CD4-positive, alpha-beta T cell (primary cell): ENCODE measurements at regions of chr2 and their contacts with region 1.

Region 1: DNA sequence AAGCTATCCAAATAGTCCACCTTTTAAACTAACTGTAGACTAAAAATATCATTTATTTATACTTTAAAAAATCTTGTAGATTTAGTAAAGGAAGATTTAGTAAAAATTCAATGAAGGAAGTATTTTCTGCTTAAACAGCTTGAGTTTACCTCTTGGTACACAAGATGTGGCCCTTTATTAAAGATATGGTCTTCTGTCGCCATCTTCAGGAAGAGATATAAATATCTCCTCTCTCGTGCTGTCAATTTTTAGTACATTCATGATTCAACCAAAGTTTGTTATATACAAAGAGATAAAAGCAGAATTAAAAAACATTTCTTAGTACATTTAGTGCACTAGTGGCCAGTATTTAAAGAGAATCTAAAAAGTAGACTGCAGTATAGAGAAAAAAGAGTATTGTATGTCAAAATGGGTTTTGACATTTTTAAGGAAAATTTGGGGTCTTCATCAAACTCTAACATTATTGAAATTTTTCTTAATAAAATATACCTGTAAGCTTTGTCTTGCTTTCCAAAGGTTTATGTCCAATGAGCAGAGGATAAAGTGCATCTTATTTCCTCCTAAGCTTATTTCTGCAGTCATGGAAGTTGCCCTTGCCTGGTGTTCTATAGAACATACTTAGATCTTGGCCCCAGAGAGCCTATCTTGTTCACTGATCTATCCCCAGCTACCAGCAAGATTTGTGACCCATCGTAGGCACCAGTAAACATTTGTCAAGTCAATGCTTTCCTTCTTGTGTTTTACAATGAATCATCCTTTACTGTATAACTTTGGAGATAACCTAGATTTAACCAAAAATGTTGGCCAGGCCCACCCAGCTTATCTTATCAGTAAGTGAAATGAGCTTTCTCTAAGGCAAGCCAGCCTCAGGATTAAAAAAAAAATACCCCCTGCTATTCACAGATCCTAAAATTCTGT is 18.5 kb upstream of the EML6 start:
- DNase-seq: peak in 3 of 14 experiments; percentile 73 to 78 (median 78)
- ATAC-seq: peak; percentile 72
- H3K4me3 ChIP-seq: no peak overlapping the region
- H3K4me3 Mint-ChIP-seq: no peak overlapping the region
- H3K27ac ChIP-seq: no peak overlapping the region
- H3K27ac Mint-ChIP-seq: no peak overlapping the region
- H3K4me1 ChIP-seq: peaks cover 12% of the 10 kb centered on the region
- H3K4me1 Mint-ChIP-seq: no peaks in the 10 kb centered on the region
- H3K27me3 ChIP-seq: peaks cover 17 to 23% of the 10 kb centered on the region in 2 experiments
- H3K27me3 Mint-ChIP-seq: peaks cover 16% of the 10 kb centered on the region
- CTCF ChIP-seq: peak; percentile 77

Region 2: DNA sequence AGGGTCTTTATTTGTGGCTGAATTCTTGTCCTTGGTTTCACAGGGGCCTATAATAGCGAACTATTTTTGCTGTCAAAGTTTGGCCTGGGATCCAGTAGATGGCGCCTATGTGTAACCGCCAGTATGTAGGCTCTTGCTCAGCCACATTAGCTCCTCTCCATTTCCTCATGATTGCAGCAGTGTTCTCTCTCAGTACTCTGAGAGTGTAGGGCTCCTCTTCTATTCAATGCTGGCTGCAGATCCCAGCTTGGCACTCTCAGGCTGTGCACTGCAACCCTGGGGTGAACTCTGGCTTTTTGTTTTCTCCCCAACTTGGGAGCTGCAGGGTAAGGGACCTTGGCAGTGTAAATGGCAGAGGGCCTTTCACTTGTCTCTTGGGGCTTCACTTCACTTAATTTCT is 1282.0 kb before region 1 on chr2:
- CTCF ChIA-PET with region 1: no interaction called
- POLR2A ChIA-PET with region 1: no interaction called
- intact Hi-C with region 1: loop called in 1 of 2 experiments (anchors 5 kb)
- DNase-seq: no peak
- ATAC-seq: no peak
- H3K4me3 ChIP-seq: no peak overlapping the region
- H3K4me3 Mint-ChIP-seq: no peak overlapping the region
- H3K27ac ChIP-seq: no peak overlapping the region
- H3K27ac Mint-ChIP-seq: no peak overlapping the region
- H3K4me1 ChIP-seq: no peaks in the 10 kb centered on the region
- H3K4me1 Mint-ChIP-seq: no peaks in the 10 kb centered on the region
- H3K27me3 ChIP-seq: no peaks in the 10 kb centered on the region
- H3K27me3 Mint-ChIP-seq: peaks cover 5% of the 10 kb centered on the region
- CTCF ChIP-seq: no peak

Region 3: DNA sequence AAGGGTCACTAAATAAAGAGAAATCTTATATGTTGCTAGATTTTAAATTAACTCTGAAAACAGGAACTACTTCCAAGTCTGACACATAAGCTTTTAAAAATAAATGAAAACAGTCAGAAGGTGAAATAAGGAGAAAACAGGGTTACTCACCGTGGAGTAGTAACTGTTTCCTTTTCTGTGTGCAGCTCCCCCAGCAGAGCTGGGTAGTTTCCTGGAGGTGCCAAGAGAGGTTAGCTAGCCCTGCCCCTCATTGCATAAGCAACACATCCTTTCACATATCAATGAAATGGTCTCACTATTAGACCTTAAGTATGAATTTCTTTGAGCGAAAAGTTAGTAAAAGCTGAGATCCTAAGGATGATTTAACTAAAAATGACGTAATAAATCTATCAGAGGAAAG is 791.2 kb before region 1 on chr2:
- CTCF ChIA-PET with region 1: no interaction called
- POLR2A ChIA-PET with region 1: no interaction called
- intact Hi-C with region 1: loop called (anchors 10 kb)
- DNase-seq: peak in 5 of 14 experiments; percentile 11 to 42 (median 13)
- ATAC-seq: peak; percentile 76
- H3K4me3 ChIP-seq: no peak overlapping the region
- H3K4me3 Mint-ChIP-seq: no peak overlapping the region
- H3K27ac ChIP-seq: no peak overlapping the region
- H3K27ac Mint-ChIP-seq: peak overlapping the region; percentile 43
- H3K4me1 ChIP-seq: no peaks in the 10 kb centered on the region
- H3K4me1 Mint-ChIP-seq: peaks cover 9% of the 10 kb centered on the region
- H3K27me3 ChIP-seq: no peaks in the 10 kb centered on the region
- H3K27me3 Mint-ChIP-seq: no peaks in the 10 kb centered on the region
- CTCF ChIP-seq: no peak

Region 4: GRCh38 chr2:54106631-54107454 is 598.1 kb before region 1 on chr2:
- CTCF ChIA-PET with region 1: no interaction called
- POLR2A ChIA-PET with region 1: interaction called, 3 read pairs
- intact Hi-C with region 1: loop called (anchors 2 kb)
- DNase-seq: peak in 12 of 14 experiments; percentile 11 to 77 (median 30)
- ATAC-seq: peak; percentile 78
- H3K4me3 ChIP-seq: no peak overlapping the region
- H3K4me3 Mint-ChIP-seq: no peak overlapping the region
- H3K27ac ChIP-seq: no peak overlapping the region
- H3K27ac Mint-ChIP-seq: no peak overlapping the region
- H3K4me1 ChIP-seq: peaks cover 8% of the 10 kb centered on the region
- H3K4me1 Mint-ChIP-seq: peaks cover 11% of the 10 kb centered on the region
- H3K27me3 ChIP-seq: no peaks in the 10 kb centered on the region
- H3K27me3 Mint-ChIP-seq: no peaks in the 10 kb centered on the region
- CTCF ChIP-seq: peak; percentile 66

Region 5: DNA sequence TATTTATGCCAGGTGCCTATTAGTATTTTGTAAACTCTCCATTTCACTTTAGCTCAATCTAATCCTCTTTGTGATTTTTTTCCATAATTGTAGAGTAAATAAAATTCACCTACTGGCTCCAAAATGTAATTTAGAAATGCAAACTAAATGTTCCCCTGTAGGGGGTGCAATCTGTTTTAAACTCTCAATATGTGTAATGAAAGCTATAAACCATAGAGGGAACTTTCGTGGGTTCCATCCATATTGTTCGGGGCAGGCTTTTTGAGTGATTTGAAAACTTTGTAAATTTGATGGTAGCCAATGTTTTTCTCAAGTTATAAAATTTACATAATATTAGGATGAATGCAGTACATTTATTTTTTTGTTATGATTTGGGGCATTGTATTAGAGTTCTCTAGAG is 498.4 kb before region 1 on chr2:
- CTCF ChIA-PET with region 1: interaction called, 3 read pairs
- POLR2A ChIA-PET with region 1: no interaction called
- intact Hi-C with region 1: loop called in 1 of 2 experiments (anchors 10 kb)
- DNase-seq: peak in 2 of 14 experiments; percentile 5 to 6
- ATAC-seq: no peak
- H3K4me3 ChIP-seq: no peak overlapping the region
- H3K4me3 Mint-ChIP-seq: no peak overlapping the region
- H3K27ac ChIP-seq: no peak overlapping the region
- H3K27ac Mint-ChIP-seq: no peak overlapping the region
- H3K4me1 ChIP-seq: no peaks in the 10 kb centered on the region
- H3K4me1 Mint-ChIP-seq: peaks cover 5% of the 10 kb centered on the region
- H3K27me3 ChIP-seq: no peaks in the 10 kb centered on the region
- H3K27me3 Mint-ChIP-seq: no peaks in the 10 kb centered on the region
- CTCF ChIP-seq: peak; percentile 43

Region 6: GRCh38 chr2:54665436-54665856 is 39.5 kb before region 1 on chr2:
- CTCF ChIA-PET with region 1: interaction called, 10 read pairs
- POLR2A ChIA-PET with region 1: no interaction called
- intact Hi-C with region 1: no loop called
- DNase-seq: peak in 9 of 14 experiments; percentile 10 to 71 (median 32)
- ATAC-seq: peak; percentile 77
- H3K4me3 ChIP-seq: no peak overlapping the region
- H3K4me3 Mint-ChIP-seq: no peak overlapping the region
- H3K27ac ChIP-seq: no peak overlapping the region
- H3K27ac Mint-ChIP-seq: peak overlapping the region; percentile 18
- H3K4me1 ChIP-seq: no peaks in the 10 kb centered on the region
- H3K4me1 Mint-ChIP-seq: peaks cover 5% of the 10 kb centered on the region
- H3K27me3 ChIP-seq: no peaks in the 10 kb centered on the region
- H3K27me3 Mint-ChIP-seq: no peaks in the 10 kb centered on the region
- CTCF ChIP-seq: peak; percentile 55